ENCODE measurements at regions of chr16 and their contacts with region 1.

Region 1: DNA sequence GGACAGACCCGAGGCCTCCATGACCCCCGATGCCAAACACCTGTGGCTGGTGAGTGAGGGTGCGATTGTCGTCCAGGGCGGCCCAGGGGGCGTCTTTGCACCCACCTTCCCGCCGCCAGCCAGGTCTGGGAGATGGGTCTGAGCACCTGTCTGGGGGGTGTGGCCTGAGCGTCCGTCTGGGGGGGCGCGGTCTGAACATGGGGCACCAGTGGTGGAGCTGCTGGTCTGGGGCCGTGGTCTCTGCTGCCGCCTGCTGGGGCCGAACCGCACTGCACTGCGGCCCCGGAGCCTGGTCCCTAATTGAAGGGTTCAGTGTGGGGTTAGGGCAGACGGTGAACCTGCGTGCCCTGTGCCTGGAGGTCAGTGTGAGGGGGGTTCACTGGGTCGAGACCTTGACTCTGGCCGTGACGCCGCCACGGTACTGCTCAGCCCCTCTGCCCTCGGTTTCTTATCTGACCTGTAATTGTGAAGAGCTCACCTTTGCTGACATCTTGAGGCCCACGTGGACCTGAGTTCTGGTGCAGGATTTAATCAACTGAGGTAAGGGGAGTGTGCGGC is 12.6 kb upstream of the TCF25 start:
- DNase-seq: peak; percentile 61 to 87 (median 76)
- ATAC-seq: peak; percentile 92
- H3K4me3 ChIP-seq: no peak overlapping the region
- H3K4me3 Mint-ChIP-seq: no peak overlapping the region
- H3K27ac ChIP-seq: no peak overlapping the region
- H3K27ac Mint-ChIP-seq: no peak overlapping the region
- H3K4me1 ChIP-seq: peaks cover 30% of the 10 kb centered on the region
- H3K4me1 Mint-ChIP-seq: peaks cover 29% of the 10 kb centered on the region
- H3K27me3 ChIP-seq: peaks cover 0 to 2% of the 10 kb centered on the region in 2 experiments
- H3K27me3 Mint-ChIP-seq: no peaks in the 10 kb centered on the region
- CTCF ChIP-seq: peak; percentile 98

Region 2: GRCh38 chr16:89641458-89642119 is 219.2 kb before region 1 on chr16:
- CTCF ChIA-PET with region 1: no interaction called
- POLR2A ChIA-PET with region 1: no interaction called
- intact Hi-C with region 1: no loop called
- DNase-seq: no peak
- ATAC-seq: no peak
- H3K4me3 ChIP-seq: no peak overlapping the region
- H3K4me3 Mint-ChIP-seq: peak overlapping the region; percentile 70
- H3K27ac ChIP-seq: no peak overlapping the region
- H3K27ac Mint-ChIP-seq: no peak overlapping the region
- H3K4me1 ChIP-seq: peaks cover 9% of the 10 kb centered on the region
- H3K4me1 Mint-ChIP-seq: peaks cover 8% of the 10 kb centered on the region
- H3K27me3 ChIP-seq: peaks cover 0 to 2% of the 10 kb centered on the region in 2 experiments
- H3K27me3 Mint-ChIP-seq: no peaks in the 10 kb centered on the region
- CTCF ChIP-seq: no peak

Region 3: GRCh38 chr16:89749647-89750046 is 111.2 kb before region 1 on chr16:
- CTCF ChIA-PET with region 1: interaction called, 16 read pairs
- POLR2A ChIA-PET with region 1: no interaction called
- intact Hi-C with region 1: loop called (anchors 1 to 2 kb)
- DNase-seq: no peak
- ATAC-seq: no peak
- H3K4me3 ChIP-seq: no peak overlapping the region
- H3K4me3 Mint-ChIP-seq: no peak overlapping the region
- H3K27ac ChIP-seq: no peak overlapping the region
- H3K27ac Mint-ChIP-seq: no peak overlapping the region
- H3K4me1 ChIP-seq: peaks cover 27% of the 10 kb centered on the region
- H3K4me1 Mint-ChIP-seq: peaks cover 15% of the 10 kb centered on the region
- H3K27me3 ChIP-seq: no peaks in the 10 kb centered on the region
- H3K27me3 Mint-ChIP-seq: no peaks in the 10 kb centered on the region
- CTCF ChIP-seq: no peak

Region 4: GRCh38 chr16:89815639-89816348 is 45.0 kb before region 1 on chr16:
- CTCF ChIA-PET with region 1: interaction called, 5 read pairs
- POLR2A ChIA-PET with region 1: interaction called, 4 read pairs
- intact Hi-C with region 1: loop called in 1 of 2 experiments (anchors 5 kb)
- DNase-seq: peak in 1 of 9 experiments; percentile 19
- ATAC-seq: peak; percentile 12
- H3K4me3 ChIP-seq: peak overlapping the region in 1 of 2 experiments; percentile 34
- H3K4me3 Mint-ChIP-seq: peak overlapping the region; percentile 80
- H3K27ac ChIP-seq: no peak overlapping the region
- H3K27ac Mint-ChIP-seq: no peak overlapping the region
- H3K4me1 ChIP-seq: peaks cover 13% of the 10 kb centered on the region
- H3K4me1 Mint-ChIP-seq: peaks cover 10% of the 10 kb centered on the region
- H3K27me3 ChIP-seq: peaks cover 0 to 7% of the 10 kb centered on the region in 2 experiments
- H3K27me3 Mint-ChIP-seq: no peaks in the 10 kb centered on the region
- CTCF ChIP-seq: no peak

Region 5: DNA sequence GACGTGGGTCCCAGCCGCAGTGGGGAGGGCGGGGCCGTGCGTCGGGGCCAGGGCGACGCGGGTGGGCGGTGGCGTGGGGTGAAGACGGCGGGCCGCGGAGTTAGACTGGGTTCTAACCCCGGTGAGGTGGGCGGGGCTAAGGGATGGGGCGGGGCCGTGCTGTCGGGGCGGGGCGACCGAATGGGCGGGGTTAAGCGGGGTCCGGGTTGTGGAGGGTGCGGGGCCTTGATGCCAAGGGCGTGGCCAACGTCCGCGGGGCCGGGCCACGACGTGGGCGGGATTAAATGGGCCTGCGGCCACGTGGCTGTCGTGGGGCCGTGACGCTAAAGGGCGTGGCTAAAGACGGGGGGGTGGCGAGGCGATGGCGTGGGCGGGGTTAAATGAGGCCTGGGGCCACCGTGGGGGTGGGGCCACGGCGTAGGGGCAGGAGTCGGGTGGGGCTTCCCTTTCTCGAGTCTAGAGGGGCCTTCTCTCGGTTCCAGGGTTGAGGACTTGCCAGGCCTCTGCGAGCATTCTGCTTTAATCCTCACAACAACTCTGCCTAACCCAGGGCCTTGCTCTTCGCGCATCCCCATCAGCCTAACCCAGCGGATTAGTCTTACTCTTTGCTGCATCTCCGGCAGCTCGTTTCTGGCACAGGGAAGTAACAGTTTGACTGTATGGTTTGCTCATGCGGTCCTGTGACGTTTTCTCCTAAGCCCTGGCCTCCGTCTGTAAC is 13.3 kb after region 1 on chr16:
- CTCF ChIA-PET with region 1: interaction called, 32 read pairs
- POLR2A ChIA-PET with region 1: interaction called, 17 read pairs
- intact Hi-C with region 1: no loop called
- DNase-seq: peak; percentile 86 to 99 (median 96)
- ATAC-seq: peak; percentile 77
- H3K4me3 ChIP-seq: peak overlapping the region; percentile 98
- H3K4me3 Mint-ChIP-seq: peak overlapping the region; percentile 90
- H3K27ac ChIP-seq: peak overlapping the region; percentile 100
- H3K27ac Mint-ChIP-seq: peak overlapping the region; percentile 99
- H3K4me1 ChIP-seq: peaks cover 23% of the 10 kb centered on the region
- H3K4me1 Mint-ChIP-seq: peaks cover 19% of the 10 kb centered on the region
- H3K27me3 ChIP-seq: no peaks in the 10 kb centered on the region
- H3K27me3 Mint-ChIP-seq: no peaks in the 10 kb centered on the region
- CTCF ChIP-seq: no peak

Region 6: DNA sequence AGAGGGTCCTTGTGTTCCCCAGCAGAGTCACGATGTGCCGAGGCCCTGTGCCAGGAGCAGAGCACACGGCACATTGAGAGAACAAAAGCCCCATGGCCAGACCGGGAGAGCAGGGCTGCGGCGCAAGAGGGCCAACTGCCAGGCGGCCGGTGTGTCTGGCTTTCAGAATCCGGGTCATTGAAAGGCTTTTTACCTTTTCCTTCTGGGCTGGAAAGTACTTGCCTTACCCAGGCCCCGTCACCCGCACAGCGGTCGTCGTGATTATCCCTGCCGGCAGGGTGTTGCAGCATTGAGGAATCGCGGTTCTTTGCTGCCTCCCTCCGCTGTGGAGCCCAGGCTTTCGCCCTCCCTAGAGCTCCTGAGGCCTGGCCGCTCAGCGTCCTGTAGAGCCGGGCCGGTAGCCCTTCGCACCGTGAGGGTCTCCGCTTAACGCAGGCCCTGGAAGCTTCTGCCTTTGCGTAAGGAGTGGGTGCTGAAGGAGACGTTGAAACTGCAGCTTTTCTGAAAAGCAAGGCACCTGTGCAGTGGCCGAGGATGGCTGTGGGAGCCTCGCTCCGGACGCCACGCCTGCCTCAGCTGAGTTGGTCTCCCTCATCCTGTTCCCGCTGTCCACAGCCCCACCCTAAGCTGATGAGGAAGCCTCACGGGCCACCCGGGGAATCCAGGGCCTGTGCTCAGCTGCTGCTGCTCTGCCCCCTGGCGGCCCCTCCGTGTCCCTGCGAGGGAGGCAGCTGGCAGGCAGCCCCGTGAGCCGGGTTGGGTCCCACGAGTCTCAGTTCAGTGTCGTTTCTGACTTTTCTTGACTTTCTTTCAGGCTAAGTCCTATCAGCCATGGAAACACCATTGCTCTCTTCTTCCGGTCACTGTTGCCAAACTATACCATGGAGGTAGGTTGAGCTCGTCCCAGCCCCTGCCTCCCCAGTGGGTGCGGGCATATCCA is 49.2 kb after region 1 on chr16:
- CTCF ChIA-PET with region 1: interaction called, 10 read pairs
- POLR2A ChIA-PET with region 1: interaction called, 3 read pairs
- intact Hi-C with region 1: no loop called
- DNase-seq: peak; percentile 43 to 80 (median 72)
- ATAC-seq: peak; percentile 83
- H3K4me3 ChIP-seq: no peak overlapping the region
- H3K4me3 Mint-ChIP-seq: no peak overlapping the region
- H3K27ac ChIP-seq: no peak overlapping the region
- H3K27ac Mint-ChIP-seq: no peak overlapping the region
- H3K4me1 ChIP-seq: peaks cover 4% of the 10 kb centered on the region
- H3K4me1 Mint-ChIP-seq: peaks cover 5% of the 10 kb centered on the region
- H3K27me3 ChIP-seq: no peaks in the 10 kb centered on the region
- H3K27me3 Mint-ChIP-seq: no peaks in the 10 kb centered on the region
- CTCF ChIP-seq: peak; percentile 77

Region 7: GRCh38 chr16:90008708-90009535 is 148.1 kb after region 1 on chr16:
- CTCF ChIA-PET with region 1: no interaction called
- POLR2A ChIA-PET with region 1: no interaction called
- intact Hi-C with region 1: no loop called
- DNase-seq: peak; percentile 37 to 83 (median 68)
- ATAC-seq: peak; percentile 98
- H3K4me3 ChIP-seq: peak overlapping the region; percentile 38 to 50
- H3K4me3 Mint-ChIP-seq: peak overlapping the region; percentile 80
- H3K27ac ChIP-seq: no peak overlapping the region
- H3K27ac Mint-ChIP-seq: peak overlapping the region; percentile 71
- H3K4me1 ChIP-seq: peaks cover 21% of the 10 kb centered on the region
- H3K4me1 Mint-ChIP-seq: peaks cover 20% of the 10 kb centered on the region
- H3K27me3 ChIP-seq: peaks cover 0 to 9% of the 10 kb centered on the region in 2 experiments
- H3K27me3 Mint-ChIP-seq: no peaks in the 10 kb centered on the region
- CTCF ChIP-seq: no peak

Measured in CD8-positive, alpha-beta T cell (primary cell).